ENCODE measurements at regions of chr12 and their contacts with region 1.

Region 1: DNA sequence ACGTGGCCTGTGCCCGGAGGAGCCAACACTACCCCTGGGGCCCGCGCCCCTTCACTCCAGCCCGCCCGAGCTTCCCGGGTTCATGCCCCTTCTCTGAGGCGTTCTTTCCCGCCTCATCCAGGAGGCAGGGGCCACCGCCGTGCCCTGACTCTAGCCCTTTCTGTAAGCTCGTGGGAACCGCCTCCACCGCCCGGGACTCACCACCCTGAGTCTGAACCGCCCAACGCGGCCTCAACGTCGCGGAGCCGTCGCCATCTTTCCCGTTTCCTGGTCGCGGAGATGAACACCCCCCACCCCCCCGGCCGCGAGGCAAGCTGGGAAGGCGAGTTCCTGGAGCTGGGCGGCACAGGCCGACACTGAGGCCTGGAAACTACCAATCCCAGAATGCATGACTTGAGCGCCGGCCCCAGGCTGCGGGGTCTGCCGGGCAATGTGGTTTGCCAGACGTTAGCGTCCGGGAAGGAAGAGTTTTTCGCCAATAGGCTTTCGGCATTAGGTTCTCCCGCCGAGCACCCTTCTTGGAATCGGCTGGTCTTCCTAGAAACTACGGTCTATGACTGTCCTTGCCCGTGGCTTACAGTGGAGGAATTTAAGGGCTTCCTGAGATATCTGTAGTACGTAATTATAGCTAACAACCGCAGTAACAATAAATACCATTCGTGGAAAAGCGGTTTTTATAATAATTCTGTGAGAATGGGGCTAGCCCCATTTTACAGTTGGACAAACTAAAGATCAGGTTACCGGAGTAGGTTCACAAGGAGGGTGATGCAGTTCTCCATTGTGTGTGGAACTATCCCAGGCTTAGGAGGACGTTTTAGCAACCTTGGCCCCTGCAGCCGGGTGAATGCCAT is at the start of gene DDX23:
- DNase-seq: peak; percentile 97
- H3K4me3 Mint-ChIP-seq: peak within 1 kb of the TSS; percentile 84
- H3K27ac Mint-ChIP-seq: peak within 1 kb of the TSS; percentile 95
- H3K4me1 Mint-ChIP-seq: peaks cover 27% of the 10 kb centered on the region
- H3K27me3 Mint-ChIP-seq: no peaks in the 10 kb centered on the region
- total RNA-seq, gene DDX23: 122 and 126 TPM in 2 replicates

Region 2: GRCh38 chr12:48716493-48717251 is 135.4 kb before region 1 on chr12 and contains the start of gene CCNT1:
- intact Hi-C with region 1: loop called (anchors 2 kb)
- DNase-seq: peak; percentile 99
- H3K4me3 Mint-ChIP-seq: peak within 1 kb of the TSS; percentile 97
- H3K27ac Mint-ChIP-seq: peak within 1 kb of the TSS; percentile 95
- H3K4me1 Mint-ChIP-seq: peaks cover 21% of the 10 kb centered on the region
- H3K27me3 Mint-ChIP-seq: peaks cover 3% of the 10 kb centered on the region
- total RNA-seq, gene CCNT1: 68.7 and 70.9 TPM in 2 replicates

Region 3: GRCh38 chr12:48814262-48815125 is 37.6 kb before region 1 on chr12:
- intact Hi-C with region 1: loop called (anchors 2 kb)
- DNase-seq: peak; percentile 96
- H3K4me3 Mint-ChIP-seq: peak overlapping the region; percentile 98
- H3K27ac Mint-ChIP-seq: peak overlapping the region; percentile 88
- H3K4me1 Mint-ChIP-seq: peaks cover 34% of the 10 kb centered on the region
- H3K27me3 Mint-ChIP-seq: peaks cover 26% of the 10 kb centered on the region

Region 4: GRCh38 chr12:48828293-48828692 is 23.8 kb before region 1 on chr12:
- intact Hi-C with region 1: no loop called
- DNase-seq: no peak
- H3K4me3 Mint-ChIP-seq: no peak overlapping the region
- H3K27ac Mint-ChIP-seq: no peak overlapping the region
- H3K4me1 Mint-ChIP-seq: no peaks in the 10 kb centered on the region
- H3K27me3 Mint-ChIP-seq: no peaks in the 10 kb centered on the region

Region 5: GRCh38 chr12:48865434-48866290 is 13.6 kb after region 1 on chr12 and contains the start of gene RND1:
- intact Hi-C with region 1: loop called (anchors 1 kb)
- DNase-seq: peak; percentile 96
- H3K4me3 Mint-ChIP-seq: peak within 1 kb of the TSS; percentile 91
- H3K27ac Mint-ChIP-seq: peak within 1 kb of the TSS; percentile 82
- H3K4me1 Mint-ChIP-seq: peaks cover 26% of the 10 kb centered on the region
- H3K27me3 Mint-ChIP-seq: peaks cover 20% of the 10 kb centered on the region
- total RNA-seq, gene RND1: 4.4 and 5.7 TPM in 2 replicates

Region 6: GRCh38 chr12:48890657-48891418 is 38.7 kb after region 1 on chr12:
- intact Hi-C with region 1: loop called (anchors 1 kb)
- DNase-seq: peak; percentile 94
- H3K4me3 Mint-ChIP-seq: peak overlapping the region; percentile 62
- H3K27ac Mint-ChIP-seq: no peak overlapping the region
- H3K4me1 Mint-ChIP-seq: peaks cover 7% of the 10 kb centered on the region
- H3K27me3 Mint-ChIP-seq: peaks cover 26% of the 10 kb centered on the region

Region 7: DNA sequence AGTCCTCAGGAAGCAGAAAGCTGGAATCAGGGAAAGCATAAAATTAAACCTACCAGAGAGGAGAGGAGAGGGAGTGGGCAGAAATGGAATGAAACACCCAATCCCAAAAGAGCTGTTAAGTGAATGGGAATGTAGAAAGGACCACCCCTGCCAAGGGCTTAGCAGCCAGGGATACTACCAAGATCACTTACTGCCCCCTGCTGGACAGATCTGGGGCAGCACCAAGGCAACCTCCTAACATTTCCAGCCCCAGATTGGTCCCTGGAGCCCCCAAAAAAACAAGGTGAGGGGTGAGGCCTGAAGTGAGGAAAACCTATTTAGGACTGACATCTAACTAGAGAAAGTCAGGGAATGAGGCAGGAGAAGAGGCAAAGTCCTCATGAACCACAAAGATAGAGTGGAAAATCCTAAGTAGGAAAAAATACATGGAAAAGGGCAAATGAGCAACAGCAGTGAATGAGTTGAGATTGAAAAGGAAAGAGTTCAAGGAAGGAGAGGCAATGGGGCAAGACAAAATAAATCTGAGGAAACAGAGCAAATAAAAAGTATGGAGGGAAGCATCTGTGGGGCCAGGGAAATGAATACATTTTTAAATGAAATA is 84.4 kb after region 1 on chr12:
- intact Hi-C with region 1: loop called (anchors 1 kb)
- DNase-seq: peak; percentile 94
- H3K4me3 Mint-ChIP-seq: no peak overlapping the region
- H3K27ac Mint-ChIP-seq: peak overlapping the region; percentile 39
- H3K4me1 Mint-ChIP-seq: peaks cover 24% of the 10 kb centered on the region
- H3K27me3 Mint-ChIP-seq: no peaks in the 10 kb centered on the region

Region 8: GRCh38 chr12:48995061-48995879 is 143.2 kb after region 1 on chr12:
- intact Hi-C with region 1: loop called (anchors 2 kb)
- DNase-seq: peak; percentile 87
- H3K4me3 Mint-ChIP-seq: peak overlapping the region; percentile 25
- H3K27ac Mint-ChIP-seq: no peak overlapping the region
- H3K4me1 Mint-ChIP-seq: peaks cover 30% of the 10 kb centered on the region
- H3K27me3 Mint-ChIP-seq: peaks cover 54% of the 10 kb centered on the region